ENCODE measurements at regions of chr5 and their contacts with region 1.

Region 1: GRCh38 chr5:31186672-31187267 is 6.7 kb upstream of the CDH6 start:
- DNase-seq: peak; percentile 64
- H3K4me3 Mint-ChIP-seq: no peak overlapping the region
- H3K27ac Mint-ChIP-seq: no peak overlapping the region
- H3K4me1 Mint-ChIP-seq: no peaks in the 10 kb centered on the region
- H3K27me3 Mint-ChIP-seq: no peaks in the 10 kb centered on the region
- CTCF ChIP-seq: peak; percentile 63

Region 2: DNA sequence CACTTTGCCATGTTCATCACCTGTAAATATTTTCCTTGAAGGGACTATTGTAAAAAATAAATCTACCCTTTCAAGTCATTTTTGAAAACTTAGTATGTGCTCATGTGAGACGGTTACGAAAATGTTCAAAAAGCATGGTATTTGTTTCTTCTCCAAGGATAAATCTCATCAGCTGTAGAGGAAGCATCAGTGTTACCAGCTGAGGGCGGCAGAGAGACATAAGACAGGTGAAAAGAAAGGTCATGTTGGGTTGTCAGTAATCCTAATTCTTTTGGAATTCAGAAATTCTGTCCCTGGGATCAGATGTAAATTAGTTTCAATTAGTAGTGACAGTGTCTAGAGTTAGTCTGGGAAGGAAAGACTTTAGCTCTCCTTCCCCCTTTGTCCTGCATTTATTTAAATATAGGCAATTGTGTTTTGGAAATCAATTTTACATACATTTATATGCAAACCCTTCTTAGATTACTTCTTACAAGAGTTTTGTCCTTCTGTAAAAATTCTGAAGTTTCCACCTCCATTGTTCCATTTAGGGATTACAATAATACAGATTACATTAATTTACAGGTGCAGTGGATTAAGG is 785.2 kb before region 1 on chr5:
- CTCF ChIA-PET with region 1: interaction called, 18 read pairs
- POLR2A ChIA-PET with region 1: no interaction called
- intact Hi-C with region 1: loop called (anchors 2 kb)
- DNase-seq: peak; percentile 68
- H3K4me3 Mint-ChIP-seq: no peak overlapping the region
- H3K27ac Mint-ChIP-seq: no peak overlapping the region
- H3K4me1 Mint-ChIP-seq: peaks cover 4% of the 10 kb centered on the region
- H3K27me3 Mint-ChIP-seq: no peaks in the 10 kb centered on the region
- CTCF ChIP-seq: peak; percentile 59

Region 3: DNA sequence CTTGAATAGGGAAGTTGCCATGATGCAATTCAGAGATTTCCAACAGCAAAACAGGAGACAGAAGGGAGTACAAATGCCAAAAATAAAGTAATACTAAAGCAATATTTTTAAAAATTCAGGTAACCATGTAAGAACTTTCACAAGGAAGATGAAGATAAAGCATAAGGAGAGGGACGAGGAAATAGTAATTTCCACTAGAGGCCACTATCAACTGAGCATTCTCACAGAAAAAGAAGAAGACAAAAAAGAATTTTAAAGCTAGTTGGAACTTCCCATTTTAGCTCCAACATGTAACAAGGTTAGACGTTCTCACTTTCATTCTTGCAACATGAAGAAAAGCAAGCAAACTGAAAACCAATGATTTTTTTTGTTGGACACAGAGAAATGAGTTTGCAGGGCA is 773.2 kb before region 1 on chr5:
- CTCF ChIA-PET with region 1: interaction called, 14 read pairs
- POLR2A ChIA-PET with region 1: no interaction called
- intact Hi-C with region 1: no loop called
- DNase-seq: no peak
- H3K4me3 Mint-ChIP-seq: no peak overlapping the region
- H3K27ac Mint-ChIP-seq: no peak overlapping the region
- H3K4me1 Mint-ChIP-seq: no peaks in the 10 kb centered on the region
- H3K27me3 Mint-ChIP-seq: no peaks in the 10 kb centered on the region
- CTCF ChIP-seq: peak; percentile 9

Region 4: GRCh38 chr5:31172881-31173280 is 13.9 kb before region 1 on chr5:
- CTCF ChIA-PET with region 1: interaction called, 16 read pairs
- POLR2A ChIA-PET with region 1: interaction called, 3 read pairs
- intact Hi-C with region 1: no loop called
- DNase-seq: no peak
- H3K4me3 Mint-ChIP-seq: no peak overlapping the region
- H3K27ac Mint-ChIP-seq: no peak overlapping the region
- H3K4me1 Mint-ChIP-seq: no peaks in the 10 kb centered on the region
- H3K27me3 Mint-ChIP-seq: no peaks in the 10 kb centered on the region
- CTCF ChIP-seq: no peak

Region 5: DNA sequence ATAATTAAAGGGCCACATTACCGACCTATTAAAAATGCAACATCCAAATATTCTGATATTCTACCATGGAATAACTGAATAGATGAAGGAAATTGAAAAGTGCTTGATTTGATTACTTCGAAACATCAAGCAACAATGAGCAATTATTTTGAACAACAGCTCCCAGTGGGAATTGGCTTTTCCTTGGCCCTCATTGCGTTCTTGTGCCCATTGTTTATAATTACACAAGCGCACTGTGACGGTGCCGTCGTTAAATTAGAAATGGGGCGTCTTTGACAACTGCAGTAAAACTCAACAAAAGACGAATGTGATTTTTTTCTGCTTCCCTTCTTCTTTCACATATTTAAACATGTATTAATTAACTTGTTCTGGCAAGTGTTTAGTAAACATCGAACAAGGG is 68.3 kb after region 1 on chr5:
- CTCF ChIA-PET with region 1: no interaction called
- POLR2A ChIA-PET with region 1: no interaction called
- intact Hi-C with region 1: no loop called
- DNase-seq: no peak
- H3K4me3 Mint-ChIP-seq: no peak overlapping the region
- H3K27ac Mint-ChIP-seq: no peak overlapping the region
- H3K4me1 Mint-ChIP-seq: no peaks in the 10 kb centered on the region
- H3K27me3 Mint-ChIP-seq: no peaks in the 10 kb centered on the region
- CTCF ChIP-seq: no peak

Measured in MCF 10A (cell line).